Aorta (tissue), 5 donors: ENCODE measurements at regions of chr18 and their contacts with region 1.

Region 1: GRCh38 chr18:45722899-45723298 is 1.1 kb upstream of the SLC14A1 start:
- DNase-seq: peak; percentile 81 to 90
- ATAC-seq: no peak
- H3K4me3 ChIP-seq: no peak overlapping the region
- H3K27ac ChIP-seq: no peak overlapping the region
- H3K4me1 ChIP-seq: peaks cover 0 to 6% of the 10 kb centered on the region in 2 donors
- H3K27me3 ChIP-seq: no peaks in the 10 kb centered on the region

Region 2: GRCh38 chr18:45775241-45775676 is 52.4 kb after region 1 on chr18:
- intact Hi-C with region 1: loop called in 1 of 2 experiments (anchors 10 kb)
- DNase-seq: peak; percentile 86 to 92
- ATAC-seq: peak; percentile 85
- H3K4me3 ChIP-seq: peak overlapping the region; percentile 41 to 58
- H3K27ac ChIP-seq: peak overlapping the region; percentile 90 to 93
- H3K4me1 ChIP-seq: peaks cover 0 to 4% of the 10 kb centered on the region in 2 donors
- H3K27me3 ChIP-seq: no peaks in the 10 kb centered on the region

Region 3: GRCh38 chr18:45839414-45840395 is 116.8 kb after region 1 on chr18:
- intact Hi-C with region 1: loop called (anchors 2 kb)
- DNase-seq: no peak
- ATAC-seq: no peak
- H3K4me3 ChIP-seq: no peak overlapping the region
- H3K27ac ChIP-seq: no peak overlapping the region
- H3K4me1 ChIP-seq: no peaks in the 10 kb centered on the region
- H3K27me3 ChIP-seq: no peaks in the 10 kb centered on the region

Region 4: GRCh38 chr18:45978084-45978483 is 255.2 kb after region 1 on chr18:
- intact Hi-C with region 1: no loop called
- DNase-seq: no peak
- ATAC-seq: no peak
- H3K4me3 ChIP-seq: no peak overlapping the region
- H3K27ac ChIP-seq: no peak overlapping the region
- H3K4me1 ChIP-seq: no peaks in the 10 kb centered on the region
- H3K27me3 ChIP-seq: no peaks in the 10 kb centered on the region